Activated B cell treated with CpG ODN at 0.5 μM for 24 hours (primary cell): ENCODE measurements at regions of chr2 and their contacts with region 1.

Region 1: GRCh38 chr2:175048275-175048674 is 43.1 kb upstream of the CHN1 start:
- DNase-seq: no peak
- ATAC-seq: no peak
- H3K4me3 Mint-ChIP-seq: no peak overlapping the region
- H3K27ac Mint-ChIP-seq: no peak overlapping the region
- H3K4me1 Mint-ChIP-seq: peaks cover 19% of the 10 kb centered on the region
- H3K27me3 Mint-ChIP-seq: no peaks in the 10 kb centered on the region
- CTCF ChIP-seq: no peak

Region 2: DNA sequence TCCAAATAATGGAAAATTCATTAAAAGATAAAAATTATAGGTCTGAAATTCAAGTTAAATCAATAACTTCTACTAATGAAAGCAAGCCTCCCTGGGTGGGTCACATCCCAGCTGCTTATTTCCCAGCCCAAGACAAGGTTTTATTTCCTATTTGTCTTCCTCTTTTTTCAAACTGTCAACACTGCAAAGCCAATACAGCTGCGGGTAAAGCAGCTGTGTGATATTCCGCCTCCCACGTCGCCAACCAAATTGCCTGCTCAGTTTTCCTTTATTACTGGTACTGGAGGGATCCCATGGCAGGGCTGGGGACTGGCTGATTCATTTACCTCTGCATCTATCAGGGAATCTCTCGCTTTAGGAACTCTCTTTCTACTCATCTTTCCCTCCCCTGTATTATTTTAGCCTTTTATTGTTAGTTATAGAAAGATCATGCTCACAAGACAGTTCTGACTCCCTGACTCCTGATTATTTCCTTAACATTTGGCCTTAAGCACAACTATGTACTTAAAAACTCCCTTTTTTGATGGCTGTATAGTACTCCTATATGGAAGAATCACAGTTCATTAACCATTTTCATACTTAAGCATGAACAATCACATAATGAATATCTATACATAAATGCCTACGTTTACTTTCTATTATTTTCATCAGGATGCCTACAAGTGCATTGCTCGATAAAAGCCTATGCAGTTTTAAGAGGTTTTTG is 1440.5 kb before region 1 on chr2:
- CTCF ChIA-PET with region 1: no interaction called
- POLR2A ChIA-PET with region 1: no interaction called
- intact Hi-C with region 1: loop called (anchors 10 kb)
- DNase-seq: no peak
- ATAC-seq: no peak
- H3K4me3 Mint-ChIP-seq: no peak overlapping the region
- H3K27ac Mint-ChIP-seq: no peak overlapping the region
- H3K4me1 Mint-ChIP-seq: no peaks in the 10 kb centered on the region
- H3K27me3 Mint-ChIP-seq: peaks cover 14% of the 10 kb centered on the region
- CTCF ChIP-seq: no peak

Region 3: GRCh38 chr2:174499371-174499770 is 548.9 kb before region 1 on chr2:
- CTCF ChIA-PET with region 1: no interaction called
- POLR2A ChIA-PET with region 1: no interaction called
- intact Hi-C with region 1: no loop called
- DNase-seq: no peak
- ATAC-seq: no peak
- H3K4me3 Mint-ChIP-seq: no peak overlapping the region
- H3K27ac Mint-ChIP-seq: no peak overlapping the region
- H3K4me1 Mint-ChIP-seq: peaks cover 4% of the 10 kb centered on the region
- H3K27me3 Mint-ChIP-seq: no peaks in the 10 kb centered on the region
- CTCF ChIP-seq: no peak

Region 4: GRCh38 chr2:175036582-175037018 is 11.7 kb before region 1 on chr2:
- CTCF ChIA-PET with region 1: no interaction called
- POLR2A ChIA-PET with region 1: no interaction called
- intact Hi-C with region 1: no loop called
- DNase-seq: no peak
- ATAC-seq: no peak
- H3K4me3 Mint-ChIP-seq: peak overlapping the region; percentile 28
- H3K27ac Mint-ChIP-seq: no peak overlapping the region
- H3K4me1 Mint-ChIP-seq: peaks cover 3% of the 10 kb centered on the region
- H3K27me3 Mint-ChIP-seq: no peaks in the 10 kb centered on the region
- CTCF ChIP-seq: no peak

Region 5: DNA sequence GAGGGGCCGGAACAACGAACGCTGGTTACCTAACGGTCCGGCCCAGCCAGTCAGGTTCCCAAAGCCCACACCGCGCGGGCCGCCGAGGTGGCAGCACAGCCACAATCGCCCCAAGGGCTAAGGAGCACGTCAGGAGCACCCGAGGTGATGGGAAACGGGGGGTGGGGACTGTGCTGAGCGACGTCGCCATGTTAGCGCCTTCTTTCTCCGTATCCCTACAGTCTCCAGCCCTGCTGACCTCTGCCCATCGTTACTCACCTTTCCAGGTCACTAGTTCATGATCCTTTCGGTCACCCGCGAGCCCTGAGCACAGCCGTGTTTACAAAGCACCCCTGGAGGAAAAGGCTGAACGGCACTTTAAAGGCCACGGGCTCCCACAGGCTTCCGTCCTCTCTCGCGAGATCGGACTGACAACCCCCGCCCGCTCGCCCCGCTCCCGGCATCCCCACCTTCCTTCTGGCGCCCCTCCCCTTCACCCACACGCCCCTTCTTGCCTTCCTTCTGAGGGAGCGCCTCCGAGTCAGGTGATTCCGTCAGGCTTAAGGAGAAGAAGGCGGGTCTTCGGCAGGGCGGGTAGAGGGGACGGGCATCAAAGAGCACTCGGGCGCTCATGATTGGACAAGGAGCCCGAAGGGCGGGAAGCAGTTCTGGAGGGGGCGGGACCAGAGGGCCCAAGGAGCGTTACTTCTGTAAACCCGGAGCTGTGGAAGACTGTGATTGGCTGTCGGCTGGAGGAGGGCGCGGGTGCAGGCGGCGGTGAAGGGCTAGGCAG is 119.7 kb after region 1 on chr2 and contains the start of gene ATF2:
- CTCF ChIA-PET with region 1: no interaction called
- POLR2A ChIA-PET with region 1: no interaction called
- intact Hi-C with region 1: no loop called
- DNase-seq: peak; percentile 87
- ATAC-seq: peak; percentile 92
- H3K4me3 Mint-ChIP-seq: peak within 1 kb of the TSS; percentile 100
- H3K27ac Mint-ChIP-seq: peak within 1 kb of the TSS; percentile 99
- H3K4me1 Mint-ChIP-seq: peaks cover 43% of the 10 kb centered on the region
- H3K27me3 Mint-ChIP-seq: no peaks in the 10 kb centered on the region
- CTCF ChIP-seq: no peak
- total RNA-seq, gene ATF2: 49.0 and 59.9 TPM in 2 replicates